ENCODE measurements at regions of chrX and their contacts with region 1.

Region 1: GRCh38 chrX:40097497-40098263 is at the start of gene BCOR:
- DNase-seq: peak; percentile 50
- H3K4me3 Mint-ChIP-seq: peak within 1 kb of the TSS; percentile 80
- H3K27ac Mint-ChIP-seq: no peak within 1 kb of the TSS
- H3K4me1 Mint-ChIP-seq: no peaks in the 10 kb centered on the region
- H3K27me3 Mint-ChIP-seq: peaks cover 4% of the 10 kb centered on the region
- CTCF ChIP-seq: no peak
- total RNA-seq, gene BCOR: 7.5 and 12.0 TPM in 2 replicates

Region 2: GRCh38 chrX:39730662-39731397 is 366.9 kb before region 1 on chrX:
- CTCF ChIA-PET with region 1: no interaction called
- POLR2A ChIA-PET with region 1: interaction called, 4 read pairs
- intact Hi-C with region 1: loop called (anchors 10 kb)
- DNase-seq: peak; percentile 70
- H3K4me3 Mint-ChIP-seq: no peak overlapping the region
- H3K27ac Mint-ChIP-seq: no peak overlapping the region
- H3K4me1 Mint-ChIP-seq: peaks cover 20% of the 10 kb centered on the region
- H3K27me3 Mint-ChIP-seq: peaks cover 25% of the 10 kb centered on the region
- CTCF ChIP-seq: peak; percentile 45

Region 3: GRCh38 chrX:39907964-39908616 is 189.6 kb before region 1 on chrX:
- CTCF ChIA-PET with region 1: no interaction called
- POLR2A ChIA-PET with region 1: no interaction called
- intact Hi-C with region 1: loop called (anchors 10 kb)
- DNase-seq: peak; percentile 90
- H3K4me3 Mint-ChIP-seq: peak overlapping the region; percentile 60
- H3K27ac Mint-ChIP-seq: peak overlapping the region; percentile 10
- H3K4me1 Mint-ChIP-seq: peaks cover 26% of the 10 kb centered on the region
- H3K27me3 Mint-ChIP-seq: peaks cover 57% of the 10 kb centered on the region
- CTCF ChIP-seq: no peak

Region 4: GRCh38 chrX:40013266-40014195 is 84.1 kb before region 1 on chrX:
- CTCF ChIA-PET with region 1: interaction called, 3 read pairs
- POLR2A ChIA-PET with region 1: interaction called, 14 read pairs
- intact Hi-C with region 1: loop called (anchors 1 kb)
- DNase-seq: peak; percentile 74
- H3K4me3 Mint-ChIP-seq: peak overlapping the region; percentile 79
- H3K27ac Mint-ChIP-seq: peak overlapping the region; percentile 82
- H3K4me1 Mint-ChIP-seq: peaks cover 6% of the 10 kb centered on the region
- H3K27me3 Mint-ChIP-seq: no peaks in the 10 kb centered on the region
- CTCF ChIP-seq: no peak

Region 5: DNA sequence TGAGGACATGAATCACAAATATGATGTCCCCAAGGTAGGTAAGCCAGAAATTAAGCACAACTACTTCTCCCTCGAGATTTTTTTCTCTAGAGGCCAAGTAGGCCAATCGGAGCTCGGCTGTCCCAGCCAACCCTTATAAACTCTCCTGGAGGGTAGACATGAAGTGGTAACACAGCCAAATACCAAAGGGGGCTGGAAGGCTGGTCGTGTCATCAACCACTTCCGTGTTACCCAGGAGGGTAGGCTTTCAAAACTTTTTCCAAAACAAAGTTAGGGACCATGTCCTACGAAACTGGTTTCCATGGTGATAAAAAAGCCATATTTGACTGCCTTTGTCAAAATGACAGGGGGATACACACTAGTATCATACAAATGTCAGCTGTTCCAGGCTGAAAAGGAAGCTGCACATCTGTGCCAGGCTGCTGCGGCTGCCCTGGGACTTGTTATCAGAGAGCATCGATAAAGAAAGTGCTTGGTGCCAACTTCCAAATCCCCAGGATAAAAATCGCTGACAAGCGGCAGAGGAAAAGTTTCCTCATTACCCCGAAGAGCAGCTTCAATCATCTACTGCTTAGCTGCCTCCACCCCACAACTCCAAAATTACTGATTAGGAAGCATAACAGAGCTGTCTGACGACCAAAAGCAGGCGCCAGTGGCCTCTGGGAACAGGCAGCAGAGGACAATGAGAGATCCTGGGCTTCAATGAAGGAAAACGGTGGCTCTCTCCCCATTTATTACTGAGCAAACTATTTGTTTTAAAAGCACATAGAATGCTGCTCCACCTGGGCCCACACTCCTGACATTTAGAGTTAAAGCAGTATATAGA is 20.7 kb before region 1 on chrX:
- CTCF ChIA-PET with region 1: no interaction called
- POLR2A ChIA-PET with region 1: no interaction called
- intact Hi-C with region 1: no loop called
- DNase-seq: no peak
- H3K4me3 Mint-ChIP-seq: no peak overlapping the region
- H3K27ac Mint-ChIP-seq: no peak overlapping the region
- H3K4me1 Mint-ChIP-seq: peaks cover 5% of the 10 kb centered on the region
- H3K27me3 Mint-ChIP-seq: peaks cover 46% of the 10 kb centered on the region
- CTCF ChIP-seq: no peak

Region 6: GRCh38 chrX:40108959-40109287 is 11.2 kb after region 1 on chrX:
- CTCF ChIA-PET with region 1: interaction called, 3 read pairs
- POLR2A ChIA-PET with region 1: interaction called, 16 read pairs
- intact Hi-C with region 1: no loop called
- DNase-seq: peak; percentile 76
- H3K4me3 Mint-ChIP-seq: peak overlapping the region; percentile 46
- H3K27ac Mint-ChIP-seq: no peak overlapping the region
- H3K4me1 Mint-ChIP-seq: peaks cover 5% of the 10 kb centered on the region
- H3K27me3 Mint-ChIP-seq: peaks cover 26% of the 10 kb centered on the region
- CTCF ChIP-seq: no peak

Measured in MCF 10A (cell line).